ENCODE measurements at regions of chr2 and their contacts with region 1.

Region 1: DNA sequence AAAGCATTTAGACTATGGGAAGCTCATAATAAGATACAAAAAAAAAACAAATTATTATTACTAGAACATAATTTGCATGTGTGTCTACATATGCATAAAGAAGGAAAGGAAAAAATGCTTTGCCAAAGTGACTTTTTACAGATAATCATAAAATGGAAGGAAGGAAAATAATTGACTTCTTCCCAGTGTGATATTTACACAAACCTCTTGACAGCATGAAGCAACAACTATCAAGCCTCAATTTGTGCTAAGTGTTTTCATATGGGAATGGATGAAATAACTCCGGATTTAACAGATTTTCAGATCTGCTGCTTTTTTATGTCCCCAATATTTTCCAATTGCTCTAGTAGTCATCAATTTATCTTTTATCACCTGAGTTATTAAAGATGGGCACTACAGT is 275.9 kb upstream of the REG3G start:
- DNase-seq: no peak

Region 2: DNA sequence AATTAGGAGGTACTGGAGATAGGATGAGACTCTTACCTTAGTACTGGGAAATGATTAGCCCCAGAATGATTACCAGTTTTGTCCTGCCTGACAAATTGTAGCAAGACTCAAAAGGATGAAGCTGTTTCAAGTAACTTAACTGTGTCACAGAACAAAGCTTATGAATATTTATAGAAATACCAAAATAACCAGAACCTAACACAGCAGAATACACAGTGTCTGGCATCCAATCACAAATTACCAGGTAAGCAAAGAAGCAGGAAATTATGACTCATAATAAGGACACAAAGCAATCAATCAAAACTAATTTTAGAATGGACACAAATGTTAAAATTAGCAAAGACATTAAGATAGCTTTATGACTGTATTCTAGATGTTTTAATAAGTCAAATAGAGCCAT is 855.1 kb after region 1 on chr2:
- intact Hi-C with region 1: loop called in 1 of 2 experiments (anchors 5 kb)
- DNase-seq: no peak